ENCODE measurements at regions of chr5 and their contacts with region 1.

Region 1: DNA sequence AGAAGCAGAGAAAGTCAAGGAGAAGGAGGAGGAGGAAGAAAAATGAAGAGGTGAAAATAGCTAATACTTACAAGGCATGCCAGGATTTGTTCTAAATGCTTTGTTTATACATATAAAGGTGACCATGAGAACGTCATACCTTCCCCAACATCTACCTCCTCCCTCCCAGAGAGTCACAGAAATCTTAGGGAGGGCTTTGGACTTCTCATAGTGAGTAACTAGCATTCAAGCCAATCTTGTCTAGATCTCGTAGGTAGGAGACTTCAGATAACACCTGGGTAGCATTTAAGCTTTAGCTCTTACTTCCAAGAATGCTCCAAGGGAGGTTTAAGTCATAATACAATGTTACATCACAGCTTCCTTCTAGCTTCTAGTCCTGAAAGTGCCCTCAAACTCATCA is 36.5 kb upstream of the GPBP1 start:
- DNase-seq: no peak
- ATAC-seq: no peak
- H3K4me3 ChIP-seq: no peak overlapping the region
- H3K4me3 Mint-ChIP-seq: no peak overlapping the region
- H3K27ac ChIP-seq: no peak overlapping the region
- H3K27ac Mint-ChIP-seq: no peak overlapping the region
- H3K4me1 ChIP-seq: no peaks in the 10 kb centered on the region
- H3K4me1 Mint-ChIP-seq: no peaks in the 10 kb centered on the region
- H3K27me3 ChIP-seq: peaks cover 0 to 11% of the 10 kb centered on the region in 2 experiments
- H3K27me3 Mint-ChIP-seq: peaks cover 0 to 5% of the 10 kb centered on the region in 2 donors

Region 2: DNA sequence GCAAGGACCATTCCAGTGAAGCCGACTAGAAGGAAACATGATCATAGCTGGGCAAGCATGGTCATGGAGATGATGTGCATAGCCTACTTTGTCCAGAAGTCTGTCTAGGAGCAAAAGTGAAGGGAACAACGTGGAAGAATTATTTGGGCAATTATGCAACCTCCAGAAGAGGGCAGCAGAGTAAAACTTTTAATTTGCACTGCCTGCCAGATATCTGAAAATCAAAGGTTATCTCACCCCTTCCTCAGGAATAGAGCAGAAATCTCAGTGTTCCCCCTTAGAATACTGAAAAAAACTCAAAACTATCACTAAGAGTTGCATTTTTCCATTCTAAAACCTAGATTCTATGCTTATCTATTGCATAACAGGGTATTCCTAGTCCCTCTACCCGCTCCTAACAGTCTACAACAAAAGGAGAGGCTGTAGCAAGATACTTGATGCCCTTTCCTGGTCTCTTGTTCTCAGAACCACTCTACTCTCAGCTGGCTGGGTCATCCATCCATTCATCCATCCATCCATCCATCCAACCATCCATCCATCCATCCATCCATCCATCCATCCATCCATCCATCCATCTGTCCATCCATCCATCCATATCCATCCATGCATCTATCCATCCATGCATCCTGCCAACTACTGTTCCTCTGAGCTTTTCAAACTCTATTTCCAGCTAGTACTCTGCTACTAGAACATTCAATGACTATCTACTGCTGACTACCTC is 236.4 kb before region 1 on chr5:
- CTCF ChIA-PET with region 1: interaction called, 7 to 28 read pairs
- POLR2A ChIA-PET with region 1: no interaction called
- DNase-seq: peak in 15 of 35 experiments; percentile 4 to 75 (median 19)
- ATAC-seq: peak; percentile 35 to 70 (median 60)
- H3K4me3 ChIP-seq: no peak overlapping the region
- H3K4me3 Mint-ChIP-seq: no peak overlapping the region
- H3K27ac ChIP-seq: no peak overlapping the region
- H3K27ac Mint-ChIP-seq: no peak overlapping the region
- H3K4me1 ChIP-seq: peaks cover 0 to 2% of the 10 kb centered on the region in 2 experiments
- H3K4me1 Mint-ChIP-seq: peaks cover 0 to 2% (median 0%) of the 10 kb centered on the region in 3 donors
- H3K27me3 ChIP-seq: no peaks in the 10 kb centered on the region
- H3K27me3 Mint-ChIP-seq: no peaks in the 10 kb centered on the region

Region 3: GRCh38 chr5:56909294-56910209 is 227.8 kb before region 1 on chr5 and contains the start of gene SETD9:
- CTCF ChIA-PET with region 1: interaction called, 7 to 10 read pairs
- POLR2A ChIA-PET with region 1: interaction called in 1 of 2 experiments, 13 read pairs
- DNase-seq: peak; percentile 45 to 89 (median 71)
- ATAC-seq: peak; percentile 78 to 89 (median 83)
- H3K4me3 ChIP-seq: peak within 1 kb of the TSS; percentile 66 to 86
- H3K4me3 Mint-ChIP-seq: peak within 1 kb of the TSS; percentile 90 to 99 (median 90)
- H3K27ac ChIP-seq: peak within 1 kb of the TSS; percentile 53
- H3K27ac Mint-ChIP-seq: peak within 1 kb of the TSS; percentile 82 to 92
- H3K4me1 ChIP-seq: peaks cover 6 to 8% of the 10 kb centered on the region in 2 experiments
- H3K4me1 Mint-ChIP-seq: peaks cover 20 to 21% (median 20%) of the 10 kb centered on the region in 3 donors
- H3K27me3 ChIP-seq: no peaks in the 10 kb centered on the region
- H3K27me3 Mint-ChIP-seq: no peaks in the 10 kb centered on the region
- total RNA-seq, gene SETD9: 0.73 to 6.4 (median 5.3) TPM

Region 4: GRCh38 chr5:56919942-56920662 is 217.3 kb before region 1 on chr5:
- CTCF ChIA-PET with region 1: no interaction called
- POLR2A ChIA-PET with region 1: interaction called in 1 of 2 experiments, 19 read pairs
- DNase-seq: no peak
- ATAC-seq: no peak
- H3K4me3 ChIP-seq: no peak overlapping the region
- H3K4me3 Mint-ChIP-seq: no peak overlapping the region
- H3K27ac ChIP-seq: no peak overlapping the region
- H3K27ac Mint-ChIP-seq: no peak overlapping the region
- H3K4me1 ChIP-seq: no peaks in the 10 kb centered on the region
- H3K4me1 Mint-ChIP-seq: peaks cover 2 to 17% (median 3%) of the 10 kb centered on the region in 3 donors
- H3K27me3 ChIP-seq: no peaks in the 10 kb centered on the region
- H3K27me3 Mint-ChIP-seq: no peaks in the 10 kb centered on the region

Region 5: DNA sequence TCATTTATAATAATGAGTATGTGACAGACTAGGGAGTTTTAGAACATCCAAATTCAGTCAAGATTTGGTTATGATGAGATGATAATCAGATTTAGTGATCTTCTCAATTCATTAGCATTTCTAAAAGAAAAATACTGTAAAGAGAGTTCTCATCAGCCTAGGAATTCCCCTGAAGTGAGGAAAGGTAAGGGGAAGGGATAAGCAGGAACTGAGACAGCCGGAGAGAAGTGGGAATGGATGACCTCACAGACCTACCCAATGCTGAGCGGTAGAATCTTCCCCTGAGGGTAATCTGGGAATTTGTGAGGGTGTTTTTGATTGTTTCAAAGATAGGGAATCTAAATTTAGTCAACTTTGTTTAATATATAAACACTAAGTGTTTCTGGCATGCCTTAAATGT is 19.7 kb after region 1 on chr5:
- CTCF ChIA-PET with region 1: no interaction called
- POLR2A ChIA-PET with region 1: no interaction called
- DNase-seq: no peak
- ATAC-seq: no peak
- H3K4me3 ChIP-seq: no peak overlapping the region
- H3K4me3 Mint-ChIP-seq: no peak overlapping the region
- H3K27ac ChIP-seq: no peak overlapping the region
- H3K27ac Mint-ChIP-seq: no peak overlapping the region
- H3K4me1 ChIP-seq: no peaks in the 10 kb centered on the region
- H3K4me1 Mint-ChIP-seq: no peaks in the 10 kb centered on the region
- H3K27me3 ChIP-seq: no peaks in the 10 kb centered on the region
- H3K27me3 Mint-ChIP-seq: no peaks in the 10 kb centered on the region

Region 6: DNA sequence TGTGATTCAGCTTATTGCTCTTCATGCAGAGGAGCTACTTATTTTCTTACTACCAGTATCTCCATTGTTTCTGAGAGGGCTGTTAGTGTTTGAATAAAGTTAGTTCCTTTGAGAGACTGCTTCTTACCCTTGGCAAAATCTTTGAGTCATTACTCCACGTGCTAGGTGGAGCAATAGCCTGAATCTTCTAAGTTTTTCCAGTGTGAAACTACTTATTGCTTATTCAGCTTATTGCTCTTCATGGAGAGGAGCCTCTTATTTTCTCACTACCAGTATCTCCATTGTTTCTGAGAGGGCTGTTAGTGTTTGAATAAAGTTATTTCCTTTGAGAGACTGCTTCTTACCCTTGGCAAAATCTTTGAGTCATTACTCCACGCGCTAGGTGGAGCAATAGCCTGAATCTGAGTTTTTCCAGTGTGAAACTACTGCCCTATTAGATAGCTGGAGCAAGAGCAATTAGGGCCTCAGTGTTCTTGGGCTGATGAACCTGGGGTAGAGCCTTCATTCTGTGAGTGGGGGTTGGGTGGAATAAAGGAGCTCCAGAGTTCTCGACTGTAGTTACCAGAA is 78.3 kb after region 1 on chr5:
- CTCF ChIA-PET with region 1: interaction called, 11 to 26 read pairs
- POLR2A ChIA-PET with region 1: no interaction called
- DNase-seq: no peak
- ATAC-seq: no peak
- H3K4me3 ChIP-seq: no peak overlapping the region
- H3K4me3 Mint-ChIP-seq: no peak overlapping the region
- H3K27ac ChIP-seq: no peak overlapping the region
- H3K27ac Mint-ChIP-seq: peak overlapping the region; percentile 70 to 78
- H3K4me1 ChIP-seq: peaks cover 0 to 11% of the 10 kb centered on the region in 2 experiments
- H3K4me1 Mint-ChIP-seq: peaks cover 59 to 64% (median 64%) of the 10 kb centered on the region in 3 donors
- H3K27me3 ChIP-seq: no peaks in the 10 kb centered on the region
- H3K27me3 Mint-ChIP-seq: no peaks in the 10 kb centered on the region

Region 7: DNA sequence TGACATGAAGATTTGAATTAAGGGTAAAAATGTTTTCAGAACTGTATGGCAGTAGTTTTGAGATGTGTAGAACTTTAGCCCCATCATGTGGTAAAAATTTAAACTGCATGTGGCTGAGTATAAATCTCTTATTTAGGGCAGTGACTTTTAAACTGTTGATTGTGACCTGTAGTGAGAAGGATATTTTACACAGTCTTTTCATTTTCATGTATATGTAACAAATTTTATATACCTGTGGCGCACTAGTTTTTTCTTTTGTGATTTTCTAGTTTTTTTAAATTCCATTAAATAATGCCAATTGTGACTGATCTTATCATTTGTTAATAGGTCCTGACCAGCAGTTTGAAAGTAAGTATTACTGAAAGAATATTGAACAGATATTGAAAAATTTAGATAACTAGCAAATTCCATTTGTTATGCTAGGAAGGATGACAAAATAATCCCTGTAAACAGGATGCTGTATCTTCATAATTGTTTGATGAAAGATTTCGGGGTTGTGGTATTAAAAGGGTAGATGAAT is 83.7 kb after region 1 on chr5:
- CTCF ChIA-PET with region 1: interaction called, 11 to 26 read pairs
- POLR2A ChIA-PET with region 1: interaction called in 1 of 2 experiments, 4 read pairs
- DNase-seq: peak in 7 of 35 experiments; percentile 10 to 87 (median 16)
- ATAC-seq: peak; percentile 64 to 69 (median 68)
- H3K4me3 ChIP-seq: no peak overlapping the region
- H3K4me3 Mint-ChIP-seq: peak overlapping the region in 1 of 3 donors; percentile 33
- H3K27ac ChIP-seq: peak overlapping the region; percentile 5
- H3K27ac Mint-ChIP-seq: peak overlapping the region; percentile 71 to 75
- H3K4me1 ChIP-seq: peaks cover 0 to 11% of the 10 kb centered on the region in 2 experiments
- H3K4me1 Mint-ChIP-seq: peaks cover 41 to 54% (median 53%) of the 10 kb centered on the region in 3 donors
- H3K27me3 ChIP-seq: no peaks in the 10 kb centered on the region
- H3K27me3 Mint-ChIP-seq: no peaks in the 10 kb centered on the region

Measured in T-cell (primary cell).